Pancreas (tissue), 10 donors: ENCODE measurements at regions of chr1 and their contacts with region 1.

Region 1: GRCh38 chr1:150149271-150150132 is at the start of gene PLEKHO1:
- DNase-seq: peak; percentile 50 to 84 (median 65)
- ATAC-seq: peak; percentile 75 to 86 (median 82)
- H3K4me3 ChIP-seq: peak within 1 kb of the TSS; percentile 20 to 57 (median 39)
- H3K27ac ChIP-seq: peak within 1 kb of the TSS in 2 of 4 donors; percentile 62
- H3K4me1 ChIP-seq: no peaks in the 10 kb centered on the region
- H3K27me3 ChIP-seq: no peaks in the 10 kb centered on the region
- CTCF ChIP-seq: no peak
- total RNA-seq, gene PLEKHO1: 1.2 to 16.1 (median 3.3) TPM

Region 2: GRCh38 chr1:150034336-150034735 is 115.2 kb before region 1 on chr1:
- intact Hi-C with region 1: no loop called
- DNase-seq: no peak
- ATAC-seq: no peak
- H3K4me3 ChIP-seq: no peak overlapping the region
- H3K27ac ChIP-seq: no peak overlapping the region
- H3K4me1 ChIP-seq: peaks cover 0 to 5% (median 0%) of the 10 kb centered on the region in 3 donors
- H3K27me3 ChIP-seq: no peaks in the 10 kb centered on the region
- CTCF ChIP-seq: no peak

Region 3: DNA sequence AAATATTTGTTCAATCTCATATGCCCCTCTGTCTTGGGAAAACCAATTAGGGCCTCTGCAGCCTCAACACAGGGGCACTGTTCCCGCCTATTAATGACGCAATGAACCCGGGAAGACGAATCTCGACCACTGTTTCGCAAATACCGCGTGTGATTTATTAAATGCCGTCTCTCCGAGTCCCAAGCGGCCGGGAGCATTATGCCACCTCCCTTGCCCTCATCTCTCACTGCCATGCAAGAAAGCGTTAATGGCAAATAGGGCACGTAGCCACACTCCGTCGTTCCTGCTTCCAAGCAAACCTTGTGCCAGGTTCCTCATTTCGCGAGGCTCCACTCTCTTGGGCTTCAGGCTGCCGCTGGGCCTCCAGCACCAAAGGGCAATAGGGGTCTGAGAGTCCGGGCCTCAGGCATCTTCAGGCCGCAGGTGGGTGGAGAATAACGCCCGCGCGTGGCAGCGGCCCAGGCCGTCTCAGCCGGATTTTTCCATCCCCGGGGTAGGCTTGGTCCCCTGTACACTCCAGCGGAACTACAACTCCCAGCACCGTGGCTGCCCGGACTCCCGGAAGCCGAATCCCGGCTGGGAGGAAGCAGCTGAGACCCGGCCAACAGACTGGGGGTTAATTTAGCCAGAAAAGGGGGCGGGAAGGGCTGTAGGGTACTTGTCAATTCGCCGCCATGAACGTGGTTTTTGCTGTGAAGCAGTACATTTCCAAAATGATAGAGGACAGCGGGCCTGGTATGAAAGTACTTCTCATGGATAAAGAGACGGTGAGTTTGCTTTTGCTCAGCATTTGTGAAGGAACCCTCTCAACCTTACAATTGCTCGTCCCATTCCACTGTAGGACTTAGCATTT is 82.1 kb before region 1 on chr1 and contains the start of gene VPS45:
- intact Hi-C with region 1: no loop called
- DNase-seq: peak; percentile 85 to 94 (median 88)
- ATAC-seq: peak; percentile 97 to 99 (median 98)
- H3K4me3 ChIP-seq: peak within 1 kb of the TSS; percentile 37 to 72 (median 66)
- H3K27ac ChIP-seq: peak within 1 kb of the TSS; percentile 66 to 96 (median 81)
- H3K4me1 ChIP-seq: peaks cover 0 to 8% (median 7%) of the 10 kb centered on the region in 3 donors
- H3K27me3 ChIP-seq: no peaks in the 10 kb centered on the region
- CTCF ChIP-seq: no peak
- total RNA-seq, gene VPS45: 7.4 to 18.7 (median 10.0) TPM

Region 4: GRCh38 chr1:150089846-150090520 is 59.5 kb before region 1 on chr1:
- intact Hi-C with region 1: loop called in 1 of 3 experiments (anchors 10 kb)
- DNase-seq: no peak
- ATAC-seq: no peak
- H3K4me3 ChIP-seq: no peak overlapping the region
- H3K27ac ChIP-seq: no peak overlapping the region
- H3K4me1 ChIP-seq: no peaks in the 10 kb centered on the region
- H3K27me3 ChIP-seq: no peaks in the 10 kb centered on the region
- CTCF ChIP-seq: no peak

Region 5: GRCh38 chr1:150106341-150106740 is 43.2 kb before region 1 on chr1:
- intact Hi-C with region 1: no loop called
- DNase-seq: no peak
- ATAC-seq: no peak
- H3K4me3 ChIP-seq: no peak overlapping the region
- H3K27ac ChIP-seq: no peak overlapping the region
- H3K4me1 ChIP-seq: no peaks in the 10 kb centered on the region
- H3K27me3 ChIP-seq: no peaks in the 10 kb centered on the region
- CTCF ChIP-seq: no peak